CD8-positive, alpha-beta memory T cell (primary cell): ENCODE measurements at regions of chr7 and their contacts with region 1.

Region 1: GRCh38 chr7:35985126-35985754 is 167.8 kb upstream of the EEPD1 start:
- DNase-seq: peak; percentile 60 to 84 (median 66)
- H3K4me3 ChIP-seq: no peak overlapping the region
- H3K4me3 Mint-ChIP-seq: no peak overlapping the region
- H3K27ac ChIP-seq: no peak overlapping the region
- H3K27ac Mint-ChIP-seq: no peak overlapping the region
- H3K4me1 ChIP-seq: no peaks in the 10 kb centered on the region
- H3K4me1 Mint-ChIP-seq: no peaks in the 10 kb centered on the region
- H3K27me3 ChIP-seq: no peaks in the 10 kb centered on the region
- H3K27me3 Mint-ChIP-seq: peaks cover 1 to 4% of the 10 kb centered on the region in 2 donors

Region 2: DNA sequence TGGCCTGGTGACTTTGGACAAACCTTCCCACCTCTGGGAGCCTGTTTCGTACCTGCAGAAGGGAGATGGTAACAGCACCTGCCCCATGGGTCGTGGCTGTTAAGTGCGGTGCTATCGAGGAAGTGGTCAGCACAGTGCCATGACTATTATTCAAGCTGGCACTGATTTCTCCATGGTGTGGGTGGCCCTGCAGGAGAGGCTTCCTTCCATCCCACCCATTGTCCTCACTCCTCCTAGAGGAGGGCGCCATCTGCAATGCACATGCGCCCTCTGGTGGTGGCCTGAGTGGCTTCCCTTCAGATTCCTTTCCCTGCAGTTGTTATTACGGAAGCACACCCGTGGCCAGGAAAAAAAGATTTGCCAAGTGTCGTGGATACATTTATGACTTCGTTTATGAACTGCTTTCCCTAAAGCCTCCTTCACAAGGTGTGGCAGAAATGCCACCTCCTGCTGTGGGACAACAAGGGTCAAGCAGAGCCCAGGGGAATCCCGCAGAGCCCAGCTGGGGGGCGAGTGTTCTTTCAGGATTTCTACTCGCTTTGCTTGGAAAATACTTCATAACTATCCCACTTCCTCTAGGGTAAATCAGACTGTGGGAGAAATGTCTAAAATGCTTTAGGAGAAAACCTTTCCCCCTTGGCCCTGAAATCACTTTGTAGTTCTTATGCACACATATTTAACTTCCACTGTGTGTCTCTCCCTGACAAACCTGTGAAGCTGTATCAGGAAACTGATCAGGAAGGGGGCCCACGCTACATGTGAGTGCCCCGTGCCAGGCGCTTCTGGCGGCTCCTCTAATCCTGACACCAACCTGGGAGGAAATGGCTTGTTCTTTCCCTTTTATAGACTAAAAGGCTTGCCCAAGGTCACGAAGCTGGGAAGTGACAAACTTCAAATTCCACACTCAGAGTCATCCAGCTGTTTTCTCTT is 306.4 kb after region 1 on chr7:
- CTCF ChIA-PET with region 1: interaction called, 116 read pairs
- POLR2A ChIA-PET with region 1: interaction called, 3 read pairs
- DNase-seq: peak; percentile 59 to 75 (median 65)
- H3K4me3 ChIP-seq: peak overlapping the region; percentile 38
- H3K4me3 Mint-ChIP-seq: peak overlapping the region; percentile 11 to 80 (median 67)
- H3K27ac ChIP-seq: no peak overlapping the region
- H3K27ac Mint-ChIP-seq: peak overlapping the region in 7 of 8 donors; percentile 25 to 88 (median 61)
- H3K4me1 ChIP-seq: peaks cover 32% of the 10 kb centered on the region
- H3K4me1 Mint-ChIP-seq: peaks cover 34 to 59% (median 52%) of the 10 kb centered on the region in 3 donors
- H3K27me3 ChIP-seq: no peaks in the 10 kb centered on the region
- H3K27me3 Mint-ChIP-seq: no peaks in the 10 kb centered on the region

Region 3: DNA sequence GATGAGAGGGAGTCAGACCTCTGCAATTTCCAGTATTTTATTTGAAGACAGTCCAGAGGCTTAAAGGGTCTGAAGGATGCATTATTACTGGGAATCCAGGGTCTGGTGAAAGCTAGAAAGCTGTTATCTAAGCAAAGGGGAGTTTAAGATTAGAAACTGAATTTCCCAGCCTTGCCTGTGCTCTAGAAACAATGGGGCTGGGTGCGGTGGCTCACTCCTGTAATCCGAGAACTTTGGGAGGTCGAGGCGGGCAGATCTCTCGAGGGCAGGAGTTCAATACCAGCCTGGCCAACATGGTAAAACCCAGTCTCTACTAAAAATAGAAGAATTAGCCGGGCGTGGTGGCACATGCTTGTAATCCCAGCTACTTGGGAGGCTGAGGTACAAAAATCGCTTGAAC is 332.9 kb after region 1 on chr7:
- CTCF ChIA-PET with region 1: interaction called, 15 read pairs
- POLR2A ChIA-PET with region 1: no interaction called
- DNase-seq: no peak
- H3K4me3 ChIP-seq: no peak overlapping the region
- H3K4me3 Mint-ChIP-seq: no peak overlapping the region
- H3K27ac ChIP-seq: no peak overlapping the region
- H3K27ac Mint-ChIP-seq: no peak overlapping the region
- H3K4me1 ChIP-seq: no peaks in the 10 kb centered on the region
- H3K4me1 Mint-ChIP-seq: no peaks in the 10 kb centered on the region
- H3K27me3 ChIP-seq: peaks cover 3% of the 10 kb centered on the region
- H3K27me3 Mint-ChIP-seq: peaks cover 5 to 24% of the 10 kb centered on the region in 2 donors